Caco-2 (cell line): ENCODE measurements at regions of chr14 and their contacts with region 1.

Region 1: GRCh38 chr14:41280745-41281144 is 325.9 kb upstream of the LRFN5 start:
- DNase-seq: no peak
- H3K4me3 ChIP-seq: no peak overlapping the region
- H3K4me3 Mint-ChIP-seq: no peak overlapping the region
- H3K27ac Mint-ChIP-seq: no peak overlapping the region
- H3K4me1 ChIP-seq: no peaks in the 10 kb centered on the region
- H3K4me1 Mint-ChIP-seq: no peaks in the 10 kb centered on the region
- H3K27me3 ChIP-seq: no peaks in the 10 kb centered on the region
- H3K27me3 Mint-ChIP-seq: no peaks in the 10 kb centered on the region
- CTCF ChIP-seq: peak in 1 of 2 experiments; percentile 25

Region 2: DNA sequence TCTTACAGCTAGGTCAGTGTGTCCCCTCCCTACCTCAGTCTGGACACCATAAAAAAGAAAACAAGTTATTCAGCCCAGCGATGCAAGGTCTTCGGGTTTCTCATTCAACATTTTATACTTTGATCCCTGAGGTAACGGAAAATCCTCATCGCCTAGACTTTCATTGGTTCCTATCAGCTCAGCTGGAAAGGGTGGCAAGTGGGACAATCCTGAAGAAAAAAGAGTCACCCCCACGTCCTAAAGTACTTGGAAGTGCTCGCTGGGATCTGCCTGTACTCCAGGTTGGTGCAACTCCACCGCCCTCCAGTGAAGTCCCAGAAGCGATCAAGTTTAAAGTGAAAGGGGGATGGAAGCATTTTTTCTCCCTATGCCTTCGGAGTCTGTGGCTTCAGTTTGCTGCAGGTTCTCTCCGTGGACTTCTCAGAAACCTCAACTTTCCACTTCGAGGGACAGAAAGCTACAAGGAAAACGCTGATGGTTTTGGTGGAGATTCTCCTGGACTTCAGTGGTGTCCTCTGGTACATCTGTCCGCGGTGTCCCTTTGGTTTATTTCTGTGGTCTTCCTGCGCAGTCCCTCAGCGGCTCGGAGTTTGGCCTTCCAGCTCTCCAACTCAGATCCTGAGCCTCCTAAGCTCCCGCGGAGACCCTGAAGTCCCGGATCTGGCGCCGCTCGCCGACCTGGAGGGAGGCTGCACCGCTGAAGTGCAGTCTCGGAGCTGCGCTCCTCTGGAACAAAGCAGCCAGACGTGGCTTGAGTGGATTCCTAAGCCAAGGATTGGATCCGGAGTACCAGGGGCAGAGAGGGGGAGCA is 324.2 kb after region 1 on chr14:
- CTCF ChIA-PET with region 1: interaction called, 4 read pairs
- POLR2A ChIA-PET with region 1: no interaction called
- intact Hi-C with region 1: loop called (anchors 1 kb)
- DNase-seq: no peak
- H3K4me3 ChIP-seq: no peak overlapping the region
- H3K4me3 Mint-ChIP-seq: no peak overlapping the region
- H3K27ac Mint-ChIP-seq: no peak overlapping the region
- H3K4me1 ChIP-seq: no peaks in the 10 kb centered on the region
- H3K4me1 Mint-ChIP-seq: no peaks in the 10 kb centered on the region
- H3K27me3 ChIP-seq: no peaks in the 10 kb centered on the region
- H3K27me3 Mint-ChIP-seq: no peaks in the 10 kb centered on the region
- CTCF ChIP-seq: no peak